ENCODE measurements at regions of chr9 and their contacts with region 1.

Region 1: GRCh38 chr9:70840266-70840665 is 281.2 kb downstream of the TRPM3 start:
- DNase-seq: no peak
- ATAC-seq: no peak
- H3K4me3 ChIP-seq: no peak overlapping the region
- H3K4me3 Mint-ChIP-seq: no peak overlapping the region
- H3K27ac ChIP-seq: no peak overlapping the region
- H3K27ac Mint-ChIP-seq: no peak overlapping the region
- H3K4me1 ChIP-seq: no peaks in the 10 kb centered on the region
- H3K4me1 Mint-ChIP-seq: no peaks in the 10 kb centered on the region
- H3K27me3 ChIP-seq: no peaks in the 10 kb centered on the region
- H3K27me3 Mint-ChIP-seq: no peaks in the 10 kb centered on the region
- CTCF ChIP-seq: no peak

Region 2: GRCh38 chr9:70789086-70789485 is 51.2 kb before region 1 on chr9:
- CTCF ChIA-PET with region 1: no interaction called
- POLR2A ChIA-PET with region 1: no interaction called
- intact Hi-C with region 1: loop called in 1 of 2 experiments (anchors 10 kb)
- DNase-seq: no peak
- ATAC-seq: no peak
- H3K4me3 ChIP-seq: no peak overlapping the region
- H3K4me3 Mint-ChIP-seq: no peak overlapping the region
- H3K27ac ChIP-seq: no peak overlapping the region
- H3K27ac Mint-ChIP-seq: no peak overlapping the region
- H3K4me1 ChIP-seq: no peaks in the 10 kb centered on the region
- H3K4me1 Mint-ChIP-seq: no peaks in the 10 kb centered on the region
- H3K27me3 ChIP-seq: no peaks in the 10 kb centered on the region
- H3K27me3 Mint-ChIP-seq: peaks cover 3% of the 10 kb centered on the region
- CTCF ChIP-seq: no peak

Measured in CD4-positive, alpha-beta T cell (primary cell).